ENCODE measurements at regions of chr7 and their contacts with region 1.

Region 1: GRCh38 chr7:5822742-5823503 is 41.5 kb upstream of the RNF216 start:
- DNase-seq: peak; percentile 89 to 99 (median 98)
- ATAC-seq: peak; percentile 83 to 88
- H3K4me3 Mint-ChIP-seq: peak overlapping the region; percentile 84 to 95 (median 90)
- H3K27ac Mint-ChIP-seq: peak overlapping the region; percentile 90 to 99 (median 96)
- H3K4me1 Mint-ChIP-seq: peaks cover 10 to 42% (median 28%) of the 10 kb centered on the region in 4 donors
- H3K27me3 Mint-ChIP-seq: no peaks in the 10 kb centered on the region

Region 2: GRCh38 chr7:5539013-5539411 is 283.9 kb before region 1 on chr7:
- POLR2A ChIA-PET with region 1: no interaction called
- DNase-seq: no peak
- ATAC-seq: peak in 1 of 2 donors; percentile 6
- H3K4me3 Mint-ChIP-seq: peak overlapping the region in 2 of 10 donors; percentile 36 to 56
- H3K27ac Mint-ChIP-seq: peak overlapping the region in 6 of 10 donors; percentile 8 to 64 (median 60)
- H3K4me1 Mint-ChIP-seq: peaks cover 7 to 15% (median 11%) of the 10 kb centered on the region in 4 donors
- H3K27me3 Mint-ChIP-seq: no peaks in the 10 kb centered on the region

Region 3: GRCh38 chr7:5780801-5781496 is 42.0 kb before region 1 on chr7:
- POLR2A ChIA-PET with region 1: interaction called, 34 read pairs
- DNase-seq: peak in 6 of 10 donors; percentile 7 to 34 (median 16)
- ATAC-seq: peak; percentile 19 to 38
- H3K4me3 Mint-ChIP-seq: peak overlapping the region; percentile 81 to 94 (median 88)
- H3K27ac Mint-ChIP-seq: peak overlapping the region; percentile 72 to 95 (median 91)
- H3K4me1 Mint-ChIP-seq: peaks cover 25 to 48% (median 43%) of the 10 kb centered on the region in 4 donors
- H3K27me3 Mint-ChIP-seq: no peaks in the 10 kb centered on the region

Region 4: DNA sequence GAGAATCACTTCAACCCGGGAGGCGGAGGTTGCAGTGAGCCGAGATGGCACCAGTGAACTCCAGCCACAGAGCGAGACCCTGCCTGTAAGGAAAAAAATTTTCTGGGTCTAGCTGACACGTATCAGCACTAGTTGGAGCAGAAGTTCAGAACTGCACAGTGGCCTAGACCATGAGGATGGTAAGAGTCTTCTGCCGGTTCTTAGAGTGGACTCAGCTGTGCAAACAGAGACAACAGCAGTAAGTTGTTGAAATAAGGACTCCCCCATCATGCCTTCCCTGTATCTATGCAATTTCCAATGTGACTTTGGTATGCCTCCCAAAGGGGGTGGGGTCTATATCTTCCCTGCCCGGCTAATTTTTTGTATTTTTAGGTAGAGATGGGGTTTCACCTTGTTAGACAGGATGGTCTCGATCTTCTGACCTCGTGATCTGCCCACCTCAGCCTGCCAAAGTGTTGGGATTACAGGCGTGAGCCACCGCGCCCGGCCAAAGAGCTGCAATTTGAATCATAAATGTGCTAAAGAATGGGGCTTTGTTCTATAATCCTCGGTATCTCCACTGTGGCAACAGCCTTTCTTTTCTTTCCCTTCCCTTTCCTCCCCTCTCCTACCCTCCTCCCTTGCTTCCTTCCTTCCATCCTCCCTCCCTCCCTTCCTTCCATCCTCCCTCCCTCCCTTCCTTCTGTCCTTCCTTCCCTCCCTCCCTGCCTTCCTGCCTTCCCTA is 27.0 kb before region 1 on chr7:
- POLR2A ChIA-PET with region 1: no interaction called
- DNase-seq: no peak
- ATAC-seq: no peak
- H3K4me3 Mint-ChIP-seq: no peak overlapping the region
- H3K27ac Mint-ChIP-seq: peak overlapping the region in 2 of 10 donors; percentile 8 to 27
- H3K4me1 Mint-ChIP-seq: peaks cover 0 to 8% (median 4%) of the 10 kb centered on the region in 4 donors
- H3K27me3 Mint-ChIP-seq: no peaks in the 10 kb centered on the region